Esophagus muscularis mucosa (tissue), 4 donors: ENCODE measurements at regions of chr3 and their contacts with region 1.

Region 1: DNA sequence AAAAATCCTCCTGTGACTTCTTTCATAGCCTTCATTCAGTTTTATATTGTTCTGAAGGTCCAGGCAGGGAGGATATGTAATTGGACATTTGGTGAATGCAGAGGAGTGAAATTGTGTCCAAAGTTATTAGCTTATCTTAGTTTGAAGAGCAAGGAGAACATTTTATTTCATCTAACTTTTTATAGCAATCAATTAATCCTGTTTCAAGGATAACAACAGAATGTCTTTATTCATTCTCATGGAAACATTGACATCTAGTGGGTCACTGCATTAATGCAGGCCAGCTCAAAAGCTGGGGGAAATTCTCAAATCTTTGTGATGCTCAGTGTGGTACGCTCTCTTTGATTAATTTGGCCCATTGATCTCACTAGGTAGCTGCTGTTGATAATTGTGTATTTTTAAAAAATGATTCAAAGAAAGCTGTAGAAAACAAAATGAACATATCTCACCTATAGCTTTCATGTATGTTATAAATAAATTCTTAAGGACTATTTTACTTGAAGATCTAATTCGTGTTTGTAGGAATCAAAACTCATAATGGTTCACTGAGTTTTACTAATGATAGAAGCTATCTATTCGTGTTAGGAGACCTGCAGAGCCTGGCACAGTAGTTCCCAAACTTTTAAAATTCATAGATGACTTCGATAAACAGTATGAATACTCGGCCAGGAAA is 150.8 kb upstream of the KCNMB2 start:
- DNase-seq: no peak
- H3K4me3 ChIP-seq: no peak overlapping the region
- H3K27ac ChIP-seq: peak overlapping the region in 3 of 4 donors; percentile 52 to 68 (median 65)
- H3K4me1 ChIP-seq: peaks cover 28 to 39% (median 37%) of the 10 kb centered on the region in 4 donors
- H3K27me3 ChIP-seq: no peaks in the 10 kb centered on the region
- CTCF ChIP-seq: peak; percentile 88 to 92 (median 91)
- EP300 ChIP-seq: no peak
- POLR2A ChIP-seq: no peak

Region 2: GRCh38 chr3:176514297-176514696 is 1871.1 kb before region 1 on chr3:
- intact Hi-C with region 1: loop called (anchors 5 kb)
- DNase-seq: no peak
- H3K4me3 ChIP-seq: no peak overlapping the region
- H3K27ac ChIP-seq: no peak overlapping the region
- H3K4me1 ChIP-seq: no peaks in the 10 kb centered on the region
- H3K27me3 ChIP-seq: no peaks in the 10 kb centered on the region
- CTCF ChIP-seq: peak; percentile 52 to 68 (median 60)
- EP300 ChIP-seq: no peak
- POLR2A ChIP-seq: no peak

Region 3: DNA sequence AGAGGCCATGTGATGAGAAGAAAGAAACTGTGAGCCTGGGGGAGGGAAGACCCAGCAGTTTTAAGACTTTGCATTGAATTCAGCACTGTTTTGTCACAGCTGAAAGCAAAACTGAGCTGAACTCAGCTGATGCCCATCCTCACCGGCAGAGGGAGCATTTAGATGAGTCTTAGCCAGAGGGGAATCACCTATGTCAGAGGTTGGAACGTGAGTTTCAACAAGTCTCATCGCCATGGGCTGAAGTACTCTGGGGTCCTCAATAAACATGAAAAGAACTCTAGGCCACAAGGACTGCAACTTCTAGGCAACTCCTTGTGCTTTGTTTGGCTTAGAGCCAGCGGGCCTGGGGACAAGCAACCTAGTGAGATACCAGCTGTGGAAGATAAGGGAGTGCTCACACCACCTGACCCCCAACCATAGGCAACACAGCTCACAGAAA is 1512.6 kb before region 1 on chr3:
- intact Hi-C with region 1: loop called (anchors 5 kb)
- DNase-seq: no peak
- H3K4me3 ChIP-seq: no peak overlapping the region
- H3K27ac ChIP-seq: no peak overlapping the region
- H3K4me1 ChIP-seq: peaks cover 0 to 5% (median 0%) of the 10 kb centered on the region in 4 donors
- H3K27me3 ChIP-seq: no peaks in the 10 kb centered on the region
- CTCF ChIP-seq: peak; percentile 60 to 75 (median 62)
- EP300 ChIP-seq: no peak
- POLR2A ChIP-seq: no peak

Region 4: DNA sequence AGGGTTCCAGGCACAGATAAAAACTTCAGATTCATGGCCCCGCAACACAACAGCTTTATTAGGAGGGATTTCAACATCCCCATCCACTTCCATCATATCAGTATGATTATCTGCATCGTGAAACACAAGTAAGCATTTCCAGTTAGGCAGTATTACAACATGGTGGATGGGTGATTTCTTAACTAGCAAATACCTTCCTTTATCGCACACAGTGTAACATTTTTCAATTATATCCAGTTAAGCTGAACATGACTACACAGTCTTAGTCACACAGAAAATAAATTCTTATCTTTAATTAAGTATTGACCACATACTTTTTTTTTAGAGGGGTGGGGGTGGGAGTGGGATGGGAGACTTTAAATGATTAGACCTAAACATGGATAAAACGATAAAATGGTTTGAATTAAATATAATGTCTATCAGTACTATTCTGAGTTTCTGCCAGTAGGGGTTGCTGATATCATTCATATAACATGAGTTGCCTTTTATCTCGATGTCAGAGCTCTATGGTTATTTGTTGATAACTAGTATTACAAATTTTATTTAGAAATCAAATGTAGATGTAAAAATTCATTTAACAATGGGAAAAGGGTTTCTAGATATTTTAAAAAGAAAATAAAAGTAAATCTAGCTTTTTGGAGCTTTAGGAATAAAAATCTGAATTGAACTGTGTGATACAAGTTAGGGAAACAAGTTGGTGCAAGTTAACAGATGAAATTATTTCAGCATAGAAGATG is 1334.7 kb before region 1 on chr3:
- intact Hi-C with region 1: loop called (anchors 10 kb)
- DNase-seq: no peak
- H3K4me3 ChIP-seq: no peak overlapping the region
- H3K27ac ChIP-seq: no peak overlapping the region
- H3K4me1 ChIP-seq: peaks cover 15 to 26% (median 22%) of the 10 kb centered on the region in 4 donors
- H3K27me3 ChIP-seq: no peaks in the 10 kb centered on the region
- CTCF ChIP-seq: peak; percentile 61 to 72 (median 63)
- EP300 ChIP-seq: no peak
- POLR2A ChIP-seq: no peak

Region 5: GRCh38 chr3:178019645-178020044 is 365.8 kb before region 1 on chr3:
- intact Hi-C with region 1: no loop called
- DNase-seq: no peak
- H3K4me3 ChIP-seq: no peak overlapping the region
- H3K27ac ChIP-seq: no peak overlapping the region
- H3K4me1 ChIP-seq: peaks cover 0 to 7% (median 0%) of the 10 kb centered on the region in 4 donors
- H3K27me3 ChIP-seq: no peaks in the 10 kb centered on the region
- CTCF ChIP-seq: no peak
- EP300 ChIP-seq: no peak
- POLR2A ChIP-seq: no peak

Region 6: DNA sequence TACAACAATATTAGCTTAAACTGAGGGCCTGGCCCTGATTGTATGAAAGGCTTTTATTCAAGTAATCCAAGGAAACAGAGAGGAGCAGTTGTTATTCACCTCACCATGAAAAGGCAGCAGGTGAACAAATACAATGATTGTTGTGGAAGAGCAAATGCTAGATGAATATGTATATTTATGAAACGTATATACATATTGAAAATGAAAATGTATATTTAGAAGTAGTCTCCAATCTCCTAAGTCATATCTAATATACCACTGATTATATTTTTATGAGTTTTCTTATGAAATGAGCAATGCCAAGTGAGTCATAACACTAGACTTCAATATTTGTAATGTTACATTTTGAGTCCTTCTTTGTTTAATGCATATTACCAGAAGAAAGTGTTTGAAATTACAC is 34.6 kb after region 1 on chr3:
- intact Hi-C with region 1: no loop called
- DNase-seq: no peak
- H3K4me3 ChIP-seq: no peak overlapping the region
- H3K27ac ChIP-seq: no peak overlapping the region
- H3K4me1 ChIP-seq: peaks cover 0 to 12% (median 10%) of the 10 kb centered on the region in 4 donors
- H3K27me3 ChIP-seq: no peaks in the 10 kb centered on the region
- CTCF ChIP-seq: no peak
- EP300 ChIP-seq: no peak
- POLR2A ChIP-seq: no peak

Region 7: DNA sequence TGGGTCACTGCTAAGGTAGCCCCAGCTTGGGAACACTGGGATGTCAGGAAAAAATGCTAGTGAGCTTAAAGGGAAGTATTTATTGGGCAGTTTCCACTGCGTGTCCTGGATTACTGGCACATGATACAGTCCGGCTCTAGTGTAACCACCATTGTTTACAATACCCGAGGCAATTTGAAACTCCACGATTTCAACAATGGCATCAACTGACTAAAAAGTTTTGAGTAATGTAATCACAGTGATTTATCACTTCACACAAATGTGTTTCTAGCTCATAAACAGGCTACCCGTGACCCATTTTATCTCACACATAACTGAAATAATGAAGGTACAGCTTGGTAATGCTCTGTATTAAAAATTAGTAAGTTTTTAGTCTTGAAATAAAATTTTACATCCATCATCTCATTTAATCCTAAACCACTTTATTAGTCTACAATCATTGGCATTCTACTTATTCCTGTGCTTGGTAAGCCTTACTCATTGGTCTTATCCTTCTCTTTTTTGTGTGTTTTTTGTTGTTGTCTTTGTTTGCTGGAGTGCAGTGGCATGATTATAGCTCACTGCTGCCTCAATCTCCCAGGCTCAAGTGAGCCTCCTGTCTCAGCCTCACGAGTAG is 678.6 kb after region 1 on chr3:
- intact Hi-C with region 1: no loop called
- DNase-seq: no peak
- H3K4me3 ChIP-seq: no peak overlapping the region
- H3K27ac ChIP-seq: peak overlapping the region in 1 of 4 donors; percentile 43
- H3K4me1 ChIP-seq: peaks cover 0 to 50% (median 27%) of the 10 kb centered on the region in 4 donors
- H3K27me3 ChIP-seq: no peaks in the 10 kb centered on the region
- CTCF ChIP-seq: no peak
- EP300 ChIP-seq: no peak
- POLR2A ChIP-seq: no peak